Activated naive CD4-positive, alpha-beta T cell treated with anti-CD3 and anti-CD28 coated beads for 36 hours (primary cell): ENCODE measurements at regions of chr15 and their contacts with region 1.

Region 1: GRCh38 chr15:50675536-50676144 is 11.0 kb downstream of the TRPM7 start:
- DNase-seq: no peak
- H3K4me3 Mint-ChIP-seq: no peak overlapping the region
- H3K27ac Mint-ChIP-seq: no peak overlapping the region
- H3K4me1 Mint-ChIP-seq: peaks cover 31% of the 10 kb centered on the region
- H3K27me3 Mint-ChIP-seq: no peaks in the 10 kb centered on the region

Region 2: DNA sequence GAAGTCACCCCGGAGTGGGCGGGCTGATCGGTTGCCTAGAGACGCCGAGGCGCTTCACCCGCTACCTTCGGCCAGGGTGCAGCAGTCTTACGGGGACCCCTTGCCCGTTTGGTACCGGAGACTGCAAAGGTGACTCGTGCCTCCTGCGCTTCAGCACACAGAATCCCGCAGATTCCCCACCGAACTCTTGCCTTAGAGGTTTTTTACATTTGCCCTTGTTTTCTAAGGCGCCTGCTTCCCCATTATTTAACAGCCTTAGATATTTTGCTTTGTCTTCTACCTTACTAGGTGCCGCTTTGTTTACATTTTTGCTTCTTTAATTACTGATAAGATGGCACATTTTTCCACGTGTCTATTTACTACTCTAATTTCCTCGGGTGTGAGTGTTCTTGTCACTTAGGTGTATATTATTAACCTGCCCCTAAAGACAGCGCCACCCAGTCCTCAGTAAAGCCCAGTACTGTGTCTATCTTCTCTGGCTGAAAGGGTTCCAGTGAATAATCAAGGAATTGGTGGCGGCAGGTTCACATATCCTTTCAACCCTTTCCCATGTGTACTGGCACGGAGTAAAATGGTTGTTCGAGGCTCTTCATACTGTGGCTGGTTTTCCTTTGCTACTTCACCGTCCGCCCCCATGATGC is 1864.2 kb before region 1 on chr15:
- CTCF ChIA-PET with region 1: no interaction called
- intact Hi-C with region 1: no loop called
- DNase-seq: peak; percentile 5
- H3K4me3 Mint-ChIP-seq: peak overlapping the region; percentile 97
- H3K27ac Mint-ChIP-seq: no peak overlapping the region
- H3K4me1 Mint-ChIP-seq: peaks cover 30% of the 10 kb centered on the region
- H3K27me3 Mint-ChIP-seq: no peaks in the 10 kb centered on the region

Region 3: GRCh38 chr15:50627351-50628055 is 48.1 kb before region 1 on chr15:
- CTCF ChIA-PET with region 1: no interaction called
- intact Hi-C with region 1: no loop called
- DNase-seq: no peak
- H3K4me3 Mint-ChIP-seq: no peak overlapping the region
- H3K27ac Mint-ChIP-seq: peak overlapping the region; percentile 1
- H3K4me1 Mint-ChIP-seq: peaks cover 14% of the 10 kb centered on the region
- H3K27me3 Mint-ChIP-seq: no peaks in the 10 kb centered on the region

Region 4: GRCh38 chr15:50726315-50726714 is 50.7 kb after region 1 on chr15:
- CTCF ChIA-PET with region 1: interaction called, 11 read pairs
- intact Hi-C with region 1: no loop called
- DNase-seq: no peak
- H3K4me3 Mint-ChIP-seq: no peak overlapping the region
- H3K27ac Mint-ChIP-seq: no peak overlapping the region
- H3K4me1 Mint-ChIP-seq: no peaks in the 10 kb centered on the region
- H3K27me3 Mint-ChIP-seq: no peaks in the 10 kb centered on the region